Gastrocnemius medialis (tissue), 4 donors: ENCODE measurements at regions of chr12 and their contacts with region 1.

Region 1: GRCh38 chr12:49707128-49707811 is at the start of gene FMNL3:
- DNase-seq: peak; percentile 90 to 94
- ATAC-seq: peak; percentile 94 to 96
- H3K4me3 ChIP-seq: peak within 1 kb of the TSS; percentile 78 to 96 (median 84)
- H3K27ac ChIP-seq: peak within 1 kb of the TSS; percentile 81 to 89 (median 86)
- H3K4me1 ChIP-seq: peaks cover 30 to 32% of the 10 kb centered on the region in 2 donors
- H3K27me3 ChIP-seq: no peaks in the 10 kb centered on the region
- CTCF ChIP-seq: peak; percentile 92 to 99 (median 98)
- POLR2A ChIP-seq: peak; percentile 59 to 60
- total RNA-seq, gene FMNL3: 2.0 to 5.5 (median 4.9) TPM

Region 2: DNA sequence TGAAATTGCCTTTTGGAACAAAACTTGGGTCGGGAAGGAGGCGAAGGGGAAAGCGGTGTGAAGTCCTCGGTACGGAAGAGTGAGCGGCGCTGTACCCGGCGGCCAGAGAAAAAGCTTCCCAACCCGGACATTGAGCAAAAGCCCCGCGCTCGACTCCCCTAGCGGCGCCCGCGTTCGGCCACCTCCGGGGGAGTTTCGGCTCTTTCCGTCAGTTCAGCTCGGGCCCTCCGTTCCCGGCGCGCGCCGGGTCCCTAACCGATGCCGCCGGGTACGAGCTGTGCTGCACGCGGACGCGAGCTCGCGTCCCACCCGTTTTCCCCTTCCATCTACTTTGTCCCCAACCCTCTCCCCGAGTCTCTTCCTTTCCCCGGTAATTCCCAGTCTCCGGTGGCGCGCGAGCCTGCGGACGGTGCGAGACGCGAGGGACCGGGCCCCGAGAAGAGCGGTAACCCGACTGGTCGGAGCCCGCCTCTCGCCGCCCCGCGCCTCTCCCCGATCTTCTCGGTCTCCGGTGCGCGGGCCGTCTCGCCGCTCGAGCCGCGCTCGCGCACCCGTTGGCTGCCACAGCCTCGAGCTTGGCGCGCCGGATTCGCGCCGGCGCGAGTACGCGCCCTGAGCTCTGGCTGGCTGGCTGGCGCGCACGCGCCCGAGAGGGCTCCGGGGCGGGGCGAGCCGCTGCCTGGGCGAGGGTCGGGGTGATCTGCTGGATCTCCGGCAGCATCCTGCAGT is 340.5 kb before region 1 on chr12:
- in situ Hi-C with region 1: no loop called
- intact Hi-C with region 1: no loop called
- DNase-seq: peak; percentile 73 to 80
- ATAC-seq: peak; percentile 86
- H3K4me3 ChIP-seq: peak overlapping the region; percentile 82 to 98 (median 87)
- H3K27ac ChIP-seq: peak overlapping the region; percentile 96 to 98 (median 97)
- H3K4me1 ChIP-seq: peaks cover 27 to 30% of the 10 kb centered on the region in 2 donors
- H3K27me3 ChIP-seq: no peaks in the 10 kb centered on the region
- CTCF ChIP-seq: peak in 3 of 5 experiments; percentile 28 to 58 (median 50)
- POLR2A ChIP-seq: peak; percentile 80 to 85

Region 3: GRCh38 chr12:49527361-49528130 is 179.7 kb before region 1 on chr12:
- in situ Hi-C with region 1: no loop called
- intact Hi-C with region 1: no loop called
- DNase-seq: no peak
- ATAC-seq: no peak
- H3K4me3 ChIP-seq: no peak overlapping the region
- H3K27ac ChIP-seq: no peak overlapping the region
- H3K4me1 ChIP-seq: no peaks in the 10 kb centered on the region
- H3K27me3 ChIP-seq: no peaks in the 10 kb centered on the region
- CTCF ChIP-seq: no peak
- POLR2A ChIP-seq: no peak

Region 4: GRCh38 chr12:49636979-49637755 is 70.1 kb before region 1 on chr12:
- in situ Hi-C with region 1: loop called (anchors 5 kb)
- intact Hi-C with region 1: loop called (anchors 2 kb)
- DNase-seq: peak; percentile 14 to 49
- ATAC-seq: peak; percentile 80 to 81
- H3K4me3 ChIP-seq: no peak overlapping the region
- H3K27ac ChIP-seq: peak overlapping the region in 3 of 4 donors; percentile 10 to 39 (median 11)
- H3K4me1 ChIP-seq: peaks cover 10 to 20% of the 10 kb centered on the region in 2 donors
- H3K27me3 ChIP-seq: no peaks in the 10 kb centered on the region
- CTCF ChIP-seq: peak; percentile 44 to 69 (median 54)
- POLR2A ChIP-seq: no peak

Region 5: DNA sequence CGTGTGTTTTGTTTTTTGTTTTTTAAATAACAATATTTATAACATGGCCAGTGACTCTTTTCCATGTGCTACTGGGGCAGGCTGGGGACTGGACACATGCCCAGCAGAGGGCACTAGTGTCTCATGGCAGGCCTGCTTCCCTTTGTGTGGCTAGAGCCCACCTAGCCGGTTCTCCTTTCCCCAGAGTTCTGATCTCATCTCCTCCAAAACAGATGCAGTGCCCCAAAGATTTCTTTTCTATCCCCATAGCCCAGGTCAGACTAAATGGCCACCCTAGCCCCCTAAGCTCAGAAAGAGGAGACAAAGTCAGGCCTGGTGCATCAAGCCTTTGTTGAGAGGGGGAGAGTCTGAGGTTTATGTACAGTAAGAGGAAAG is 62.7 kb before region 1 on chr12:
- in situ Hi-C with region 1: loop called (anchors 5 kb)
- intact Hi-C with region 1: loop called (anchors 1 kb)
- DNase-seq: peak; percentile 52 to 65
- ATAC-seq: peak; percentile 51 to 70
- H3K4me3 ChIP-seq: no peak overlapping the region
- H3K27ac ChIP-seq: peak overlapping the region in 1 of 4 donors; percentile 15
- H3K4me1 ChIP-seq: peaks cover 23 to 34% of the 10 kb centered on the region in 2 donors
- H3K27me3 ChIP-seq: no peaks in the 10 kb centered on the region
- CTCF ChIP-seq: peak; percentile 89 to 95 (median 92)
- POLR2A ChIP-seq: no peak

Region 6: GRCh38 chr12:49662998-49663843 is 44.0 kb before region 1 on chr12:
- in situ Hi-C with region 1: no loop called
- intact Hi-C with region 1: loop called (anchors 5 kb)
- DNase-seq: peak; percentile 45 to 81
- ATAC-seq: peak; percentile 68 to 93
- H3K4me3 ChIP-seq: no peak overlapping the region
- H3K27ac ChIP-seq: peak overlapping the region; percentile 72 to 85 (median 78)
- H3K4me1 ChIP-seq: peaks cover 50 to 55% of the 10 kb centered on the region in 2 donors
- H3K27me3 ChIP-seq: no peaks in the 10 kb centered on the region
- CTCF ChIP-seq: no peak
- POLR2A ChIP-seq: no peak

Region 7: DNA sequence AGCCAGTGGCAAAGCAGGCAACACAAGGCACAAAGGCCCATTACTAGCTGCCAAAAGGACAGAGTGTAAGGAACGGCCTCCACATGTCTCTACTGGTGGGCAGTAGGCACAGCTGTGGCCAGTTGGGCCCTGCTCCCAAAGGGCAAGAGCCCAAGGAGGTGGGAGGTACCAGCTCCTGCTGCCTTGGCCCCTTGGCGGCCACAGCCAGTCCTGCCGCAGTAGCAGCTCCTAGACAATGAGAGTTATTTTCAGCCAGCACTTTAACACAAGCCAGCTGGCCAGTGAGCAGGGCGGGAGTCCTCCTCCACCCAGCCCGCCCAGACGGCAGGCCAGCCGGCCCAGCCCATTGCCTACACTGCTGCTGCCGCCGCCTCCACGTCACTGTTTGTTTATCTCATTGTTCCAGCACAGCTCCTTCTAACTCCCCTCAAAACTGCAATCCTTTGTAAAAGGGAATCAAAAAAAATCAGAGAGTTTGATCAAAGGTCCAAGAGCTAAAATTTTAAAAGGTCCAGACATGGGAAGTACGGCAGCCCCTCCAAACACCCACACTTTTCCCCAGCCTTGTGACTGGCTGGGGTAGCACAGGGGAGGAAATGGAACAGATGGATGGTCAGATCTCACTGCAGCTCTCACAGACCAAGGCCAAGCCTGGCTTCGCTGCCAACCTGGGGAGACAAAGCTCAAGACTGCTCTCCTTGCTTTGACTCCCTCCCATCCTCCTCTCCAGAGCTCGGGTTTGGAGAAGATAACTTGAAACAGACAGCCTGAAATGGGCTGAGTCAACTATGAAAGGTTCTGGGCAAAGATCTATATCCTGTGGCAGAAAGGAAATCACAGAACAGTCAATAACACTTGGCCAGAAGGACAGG is 33.6 kb before region 1 on chr12:
- in situ Hi-C with region 1: no loop called
- intact Hi-C with region 1: loop called (anchors 1 kb)
- DNase-seq: peak; percentile 78 to 90
- ATAC-seq: peak; percentile 90
- H3K4me3 ChIP-seq: peak overlapping the region in 1 of 4 donors; percentile 12
- H3K27ac ChIP-seq: peak overlapping the region; percentile 81 to 90 (median 84)
- H3K4me1 ChIP-seq: peaks cover 61 to 68% of the 10 kb centered on the region in 2 donors
- H3K27me3 ChIP-seq: no peaks in the 10 kb centered on the region
- CTCF ChIP-seq: peak; percentile 37 to 71 (median 60)
- POLR2A ChIP-seq: peak; percentile 54 to 71

Region 8: GRCh38 chr12:49740930-49741881 is 33.9 kb after region 1 on chr12 and contains the start of gene TMBIM6:
- in situ Hi-C with region 1: no loop called
- intact Hi-C with region 1: loop called (anchors 1 kb)
- DNase-seq: peak; percentile 100
- ATAC-seq: peak; percentile 98 to 99
- H3K4me3 ChIP-seq: peak within 1 kb of the TSS; percentile 80 to 100 (median 88)
- H3K27ac ChIP-seq: peak within 1 kb of the TSS; percentile 97 to 100 (median 98)
- H3K4me1 ChIP-seq: peaks cover 31 to 38% of the 10 kb centered on the region in 2 donors
- H3K27me3 ChIP-seq: no peaks in the 10 kb centered on the region
- CTCF ChIP-seq: peak; percentile 91 to 98 (median 95)
- POLR2A ChIP-seq: peak; percentile 98 to 99
- total RNA-seq, gene TMBIM6: 181 to 310 (median 224) TPM

Region 9: GRCh38 chr12:50234347-50234746 is 527.1 kb after region 1 on chr12:
- in situ Hi-C with region 1: no loop called
- intact Hi-C with region 1: no loop called
- DNase-seq: no peak
- ATAC-seq: peak in 1 of 2 donors; percentile 38
- H3K4me3 ChIP-seq: no peak overlapping the region
- H3K27ac ChIP-seq: no peak overlapping the region
- H3K4me1 ChIP-seq: peaks cover 0 to 17% of the 10 kb centered on the region in 2 donors
- H3K27me3 ChIP-seq: no peaks in the 10 kb centered on the region
- CTCF ChIP-seq: no peak
- POLR2A ChIP-seq: no peak

Region 10: DNA sequence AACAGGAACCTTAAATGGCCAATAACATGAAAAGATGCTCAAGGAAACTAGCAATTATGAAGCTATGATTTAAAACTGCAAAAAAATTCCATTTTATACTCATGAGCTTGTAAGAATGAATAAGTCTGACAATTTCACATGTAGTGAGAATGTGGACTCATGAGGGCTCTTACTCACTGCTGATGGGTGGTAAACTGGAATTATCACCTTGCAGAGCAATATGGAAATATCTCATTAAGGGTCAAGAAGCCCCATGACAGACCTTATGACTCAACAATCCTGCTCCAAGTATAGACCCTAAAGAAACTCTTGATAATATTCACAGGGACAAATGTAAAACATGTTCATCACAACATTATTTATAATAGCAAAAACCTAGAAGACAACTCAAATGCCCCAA is 1586.4 kb after region 1 on chr12:
- in situ Hi-C with region 1: no loop called
- intact Hi-C with region 1: no loop called
- DNase-seq: no peak
- ATAC-seq: no peak
- H3K4me3 ChIP-seq: no peak overlapping the region
- H3K27ac ChIP-seq: no peak overlapping the region
- H3K4me1 ChIP-seq: no peaks in the 10 kb centered on the region
- H3K27me3 ChIP-seq: no peaks in the 10 kb centered on the region
- CTCF ChIP-seq: no peak
- POLR2A ChIP-seq: no peak